ENCODE measurements at regions of chr18 and their contacts with region 1.

Region 1: GRCh38 chr18:79679111-79679872 is at the start of gene CTDP1:
- DNase-seq: peak; percentile 99
- H3K4me3 ChIP-seq: peak within 1 kb of the TSS; percentile 84 to 98 (median 98)
- H3K27ac ChIP-seq: peak within 1 kb of the TSS; percentile 94
- H3K4me1 ChIP-seq: peaks cover 22% of the 10 kb centered on the region
- H3K27me3 ChIP-seq: no peaks in the 10 kb centered on the region
- CTCF ChIP-seq: no peak
- total RNA-seq, gene CTDP1: 20.7 to 23.5 TPM

Region 2: DNA sequence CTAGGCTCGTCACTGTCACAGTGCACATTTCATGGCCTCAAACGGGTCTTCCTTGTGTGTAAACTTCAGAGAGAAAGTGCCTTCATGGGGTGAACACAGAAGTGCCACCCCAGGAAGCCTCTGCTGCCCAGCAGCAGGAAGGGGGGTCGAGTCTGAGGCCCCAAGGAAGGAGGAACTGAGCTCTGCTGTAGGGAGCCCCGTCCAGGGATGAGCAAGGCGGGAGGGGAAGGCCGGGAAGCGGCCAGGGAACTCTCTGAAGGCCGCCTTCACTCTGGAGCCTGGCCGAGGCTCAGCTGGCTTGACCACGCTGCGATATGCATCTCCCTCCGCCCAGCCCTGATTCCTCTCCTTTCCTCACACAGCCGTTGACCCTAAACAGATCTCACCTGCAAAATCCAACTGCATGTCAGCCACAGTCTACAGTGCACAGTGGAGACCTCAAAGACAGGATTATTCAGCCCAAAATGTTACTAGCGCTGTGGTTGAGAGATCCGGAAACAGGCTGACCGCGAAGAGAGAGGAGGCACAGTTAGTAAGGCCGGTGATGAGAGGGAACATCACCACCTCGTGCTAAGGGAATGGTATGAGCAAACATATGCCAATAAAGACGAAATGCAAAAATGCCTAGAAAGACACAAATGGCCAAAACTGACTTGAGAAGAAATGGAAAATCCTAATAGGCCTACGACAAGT is 33.9 kb before region 1 on chr18:
- CTCF ChIA-PET with region 1: no interaction called
- dilution Hi-C with region 1: no loop called
- in situ Hi-C with region 1: no loop called
- intact Hi-C with region 1: no loop called
- DNase-seq: no peak
- H3K4me3 ChIP-seq: no peak overlapping the region
- H3K27ac ChIP-seq: no peak overlapping the region
- H3K4me1 ChIP-seq: no peaks in the 10 kb centered on the region
- H3K27me3 ChIP-seq: no peaks in the 10 kb centered on the region
- CTCF ChIP-seq: no peak

Region 3: DNA sequence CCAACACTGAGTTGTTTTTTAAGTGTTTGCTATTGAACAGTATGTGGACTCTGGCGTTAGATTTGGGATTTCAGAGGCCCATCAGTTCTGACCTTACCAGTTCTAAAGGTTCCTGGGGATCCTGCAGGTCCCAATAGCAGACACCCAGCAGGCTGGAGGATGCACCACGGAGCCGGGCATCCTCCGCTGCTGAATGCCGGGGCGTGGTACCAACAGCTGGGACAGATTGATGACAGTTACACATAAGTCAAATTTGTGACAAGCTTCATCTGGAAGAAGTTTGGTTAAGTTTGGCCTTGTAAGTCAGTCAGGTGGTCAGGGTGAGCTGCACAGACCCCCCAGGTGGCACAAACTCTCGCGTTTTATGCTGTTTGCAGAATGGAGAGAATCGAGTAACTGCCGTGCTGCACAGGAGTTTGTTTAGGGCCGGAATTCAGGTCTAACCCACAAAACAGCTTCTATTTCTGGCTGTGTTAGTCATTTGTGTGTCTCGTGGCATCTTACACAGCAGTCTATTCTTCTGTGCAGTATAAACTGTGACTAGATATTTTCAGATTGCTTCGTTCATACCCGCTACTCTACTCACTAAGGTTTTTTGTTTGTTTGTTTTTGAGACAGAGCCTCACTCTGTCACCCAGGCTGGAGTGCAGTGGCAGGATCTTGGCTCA is 19.5 kb after region 1 on chr18:
- CTCF ChIA-PET with region 1: no interaction called
- dilution Hi-C with region 1: no loop called
- in situ Hi-C with region 1: no loop called
- intact Hi-C with region 1: no loop called
- DNase-seq: no peak
- H3K4me3 ChIP-seq: no peak overlapping the region
- H3K27ac ChIP-seq: no peak overlapping the region
- H3K4me1 ChIP-seq: no peaks in the 10 kb centered on the region
- H3K27me3 ChIP-seq: no peaks in the 10 kb centered on the region
- CTCF ChIP-seq: no peak

Region 4: DNA sequence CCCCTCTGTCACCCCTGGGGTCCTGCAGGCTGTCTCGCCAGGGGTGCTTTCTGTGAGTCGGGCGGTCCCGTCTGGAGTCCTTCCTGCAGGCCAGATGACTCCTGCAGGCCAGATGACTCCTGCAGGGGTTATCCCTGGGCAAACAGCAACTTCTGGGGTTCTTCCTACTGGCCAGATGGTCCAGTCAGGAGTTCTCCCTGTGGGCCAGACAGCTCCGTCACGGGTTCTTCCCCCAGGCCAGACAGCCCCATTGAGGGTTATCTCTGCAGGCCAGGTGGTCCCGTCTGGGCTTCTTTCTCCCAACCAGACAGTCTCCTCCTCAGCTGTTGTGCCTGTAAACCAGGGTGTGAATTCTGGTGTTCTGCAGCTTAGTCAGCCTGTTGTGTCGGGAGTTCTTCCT is 457.4 kb after region 1 on chr18:
- CTCF ChIA-PET with region 1: no interaction called
- dilution Hi-C with region 1: no loop called
- in situ Hi-C with region 1: no loop called
- intact Hi-C with region 1: loop called (anchors 10 kb)
- DNase-seq: no peak
- H3K4me3 ChIP-seq: no peak overlapping the region
- H3K27ac ChIP-seq: no peak overlapping the region
- H3K4me1 ChIP-seq: peaks cover 15% of the 10 kb centered on the region
- H3K27me3 ChIP-seq: no peaks in the 10 kb centered on the region
- CTCF ChIP-seq: no peak

Region 5: DNA sequence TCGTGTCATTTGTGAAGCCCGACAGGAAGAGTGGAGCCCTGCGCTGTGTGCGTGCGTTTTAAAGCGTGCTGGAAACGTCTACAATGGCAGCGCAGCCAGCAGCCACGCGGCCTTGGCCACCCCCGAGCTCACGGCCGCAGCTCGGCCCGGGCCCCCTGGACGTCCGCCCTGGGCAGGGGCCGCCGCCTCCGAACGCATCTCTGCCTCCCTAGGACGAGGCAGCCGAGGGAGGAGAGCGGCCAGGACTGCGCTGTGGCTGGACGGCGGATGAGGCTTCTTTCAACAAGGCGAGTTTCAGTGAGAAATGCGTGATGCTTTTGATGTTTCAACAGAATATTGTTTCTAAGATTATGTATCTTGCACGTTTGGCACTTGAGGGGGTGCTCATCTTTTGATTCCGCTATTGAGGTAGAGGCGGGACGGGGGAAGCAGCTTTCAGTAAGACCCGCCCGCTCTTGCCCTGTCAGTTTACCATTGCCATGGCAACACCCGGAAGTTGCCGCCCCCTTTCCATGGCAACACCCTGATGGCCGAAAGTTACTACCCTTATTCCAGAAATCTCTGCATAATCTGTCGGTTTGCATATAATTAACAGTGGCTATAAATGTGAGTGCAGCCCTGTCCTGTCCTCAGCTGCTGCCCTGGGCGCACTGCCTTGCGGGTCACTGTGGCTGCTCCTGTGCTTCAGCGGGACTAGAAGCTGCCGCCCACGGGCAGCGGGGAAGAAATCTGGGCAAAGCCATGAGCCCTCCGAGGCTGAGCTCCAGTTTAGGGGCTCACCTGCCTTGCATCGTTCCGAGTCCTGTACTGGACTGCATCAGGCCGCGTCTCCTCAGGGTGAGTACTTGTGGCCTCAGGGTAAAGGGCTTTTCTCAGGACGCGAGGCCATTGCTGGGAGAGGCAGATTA is 468.4 kb after region 1 on chr18:
- CTCF ChIA-PET with region 1: no interaction called
- dilution Hi-C with region 1: no loop called
- in situ Hi-C with region 1: no loop called
- intact Hi-C with region 1: no loop called
- DNase-seq: peak; percentile 86
- H3K4me3 ChIP-seq: peak overlapping the region; percentile 68 to 78 (median 72)
- H3K27ac ChIP-seq: peak overlapping the region; percentile 67
- H3K4me1 ChIP-seq: peaks cover 15% of the 10 kb centered on the region
- H3K27me3 ChIP-seq: no peaks in the 10 kb centered on the region
- CTCF ChIP-seq: no peak